ENCODE measurements at regions of chr22 and their contacts with region 1.

Region 1: GRCh38 chr22:28247667-28248363 is 328.8 kb upstream of the PITPNB start:
- DNase-seq: no peak
- ATAC-seq: peak in 1 of 4 donors; percentile 52
- H3K4me3 ChIP-seq: no peak overlapping the region
- H3K27ac ChIP-seq: peak overlapping the region in 2 of 12 donors; percentile 63 to 65
- H3K4me1 ChIP-seq: peaks cover 0 to 65% (median 37%) of the 10 kb centered on the region in 12 donors
- H3K27me3 ChIP-seq: no peaks in the 10 kb centered on the region
- CTCF ChIP-seq: no peak
- POLR2A ChIP-seq: no peak

Region 2: GRCh38 chr22:28051787-28052356 is 195.9 kb before region 1 on chr22:
- intact Hi-C with region 1: loop called in 1 of 10 experiments (anchors 10 kb)
- DNase-seq: peak; percentile 56 to 79 (median 69)
- ATAC-seq: peak in 3 of 4 donors; percentile 62 to 77 (median 66)
- H3K4me3 ChIP-seq: no peak overlapping the region
- H3K27ac ChIP-seq: no peak overlapping the region
- H3K4me1 ChIP-seq: peaks cover 0 to 22% (median 5%) of the 10 kb centered on the region in 12 donors
- H3K27me3 ChIP-seq: no peaks in the 10 kb centered on the region
- CTCF ChIP-seq: peak; percentile 70 to 95 (median 89)
- POLR2A ChIP-seq: no peak

Region 3: DNA sequence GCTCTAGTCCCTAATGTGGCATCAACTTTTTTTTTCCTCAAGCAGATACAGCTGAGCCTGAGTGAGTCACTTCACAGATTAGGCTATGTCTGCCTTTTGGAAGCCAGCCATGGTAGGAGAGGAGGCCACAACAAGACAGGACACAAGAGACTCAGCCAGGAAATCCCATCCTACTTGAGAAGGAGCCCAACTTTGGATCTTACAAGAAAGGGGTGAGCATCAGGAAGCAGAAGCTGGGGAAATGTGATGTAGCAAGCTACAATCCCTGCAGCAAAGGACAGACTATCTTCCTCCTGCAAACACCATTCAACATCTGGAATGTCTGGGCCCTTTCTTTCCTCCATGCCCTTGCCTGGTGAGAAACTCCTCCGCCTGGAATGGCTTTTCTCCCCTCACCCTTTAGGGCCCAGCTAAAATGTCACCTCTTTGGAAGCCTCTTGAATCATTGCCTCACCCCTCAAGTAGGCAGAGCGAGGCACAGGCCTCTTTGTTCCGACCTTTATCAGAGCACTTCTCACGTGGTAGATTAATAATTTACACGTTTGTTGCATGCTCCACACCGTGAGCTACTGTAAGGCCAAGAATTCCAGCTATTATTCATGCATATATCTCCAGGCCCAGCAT is 172.3 kb before region 1 on chr22:
- intact Hi-C with region 1: loop called in 1 of 10 experiments (anchors 10 kb)
- DNase-seq: peak in 4 of 5 donors; percentile 49 to 74 (median 63)
- ATAC-seq: peak; percentile 72 to 85 (median 80)
- H3K4me3 ChIP-seq: no peak overlapping the region
- H3K27ac ChIP-seq: peak overlapping the region in 11 of 12 donors; percentile 54 to 81 (median 71)
- H3K4me1 ChIP-seq: peaks cover 0 to 30% (median 17%) of the 10 kb centered on the region in 12 donors
- H3K27me3 ChIP-seq: no peaks in the 10 kb centered on the region
- CTCF ChIP-seq: no peak
- POLR2A ChIP-seq: no peak

Measured in heart left ventricle (tissue), 16 donors.